Activated CD4-positive, alpha-beta T cell treated with anti-CD3 and anti-CD28 coated beads for 36 hours (primary cell): ENCODE measurements at regions of chr1 and their contacts with region 1.

Region 1: DNA sequence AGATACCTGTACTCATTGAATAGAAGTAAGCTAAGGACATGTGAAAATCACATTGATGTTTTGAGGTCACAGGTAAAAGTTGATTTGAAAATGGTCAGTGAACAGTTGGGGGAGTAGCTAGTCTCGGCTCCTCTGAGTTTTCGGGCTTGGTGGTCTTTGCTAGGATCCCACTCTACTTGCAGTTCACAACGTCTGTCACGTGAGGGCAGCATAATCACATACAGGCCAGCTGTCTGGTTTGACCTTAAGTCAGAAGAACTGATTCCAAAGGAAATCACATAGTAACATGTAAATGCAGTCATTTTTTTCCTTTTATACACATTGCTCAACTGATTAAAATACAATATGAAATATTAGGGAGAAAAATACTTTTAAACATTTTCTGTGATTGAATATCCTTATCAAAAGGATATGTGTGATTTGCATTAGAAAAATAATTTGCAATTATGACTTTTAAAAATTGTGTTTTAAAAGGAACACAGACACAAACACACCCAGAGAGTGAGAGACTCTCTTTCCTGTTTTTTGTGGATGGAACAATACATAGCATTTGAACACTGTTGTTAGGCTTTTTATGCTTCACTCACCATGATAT is 21.8 kb upstream of the PDC start:
- DNase-seq: peak; percentile 76
- ATAC-seq: peak; percentile 58
- H3K4me3 Mint-ChIP-seq: no peak overlapping the region
- H3K27ac Mint-ChIP-seq: no peak overlapping the region
- H3K4me1 Mint-ChIP-seq: no peaks in the 10 kb centered on the region
- H3K27me3 Mint-ChIP-seq: peaks cover 3% of the 10 kb centered on the region

Region 2: GRCh38 chr1:186465946-186466345 is 16.8 kb before region 1 on chr1:
- CTCF ChIA-PET with region 1: no interaction called
- POLR2A ChIA-PET with region 1: no interaction called
- intact Hi-C with region 1: no loop called
- DNase-seq: no peak
- ATAC-seq: no peak
- H3K4me3 Mint-ChIP-seq: no peak overlapping the region
- H3K27ac Mint-ChIP-seq: no peak overlapping the region
- H3K4me1 Mint-ChIP-seq: no peaks in the 10 kb centered on the region
- H3K27me3 Mint-ChIP-seq: peaks cover 6% of the 10 kb centered on the region

Region 3: GRCh38 chr1:186502087-186502486 is 19.3 kb after region 1 on chr1:
- CTCF ChIA-PET with region 1: no interaction called
- POLR2A ChIA-PET with region 1: no interaction called
- intact Hi-C with region 1: no loop called
- DNase-seq: no peak
- ATAC-seq: no peak
- H3K4me3 Mint-ChIP-seq: no peak overlapping the region
- H3K27ac Mint-ChIP-seq: no peak overlapping the region
- H3K4me1 Mint-ChIP-seq: no peaks in the 10 kb centered on the region
- H3K27me3 Mint-ChIP-seq: no peaks in the 10 kb centered on the region

Region 4: GRCh38 chr1:186531561-186532165 is 48.9 kb after region 1 on chr1:
- CTCF ChIA-PET with region 1: no interaction called
- POLR2A ChIA-PET with region 1: no interaction called
- intact Hi-C with region 1: no loop called
- DNase-seq: no peak
- ATAC-seq: no peak
- H3K4me3 Mint-ChIP-seq: no peak overlapping the region
- H3K27ac Mint-ChIP-seq: no peak overlapping the region
- H3K4me1 Mint-ChIP-seq: no peaks in the 10 kb centered on the region
- H3K27me3 Mint-ChIP-seq: peaks cover 2% of the 10 kb centered on the region

Region 5: GRCh38 chr1:186605762-186606350 is 123.1 kb after region 1 on chr1:
- CTCF ChIA-PET with region 1: no interaction called
- POLR2A ChIA-PET with region 1: no interaction called
- intact Hi-C with region 1: loop called (anchors 2 to 5 kb)
- DNase-seq: peak; percentile 47
- ATAC-seq: peak; percentile 42
- H3K4me3 Mint-ChIP-seq: no peak overlapping the region
- H3K27ac Mint-ChIP-seq: no peak overlapping the region
- H3K4me1 Mint-ChIP-seq: peaks cover 4% of the 10 kb centered on the region
- H3K27me3 Mint-ChIP-seq: peaks cover 21% of the 10 kb centered on the region

Region 6: DNA sequence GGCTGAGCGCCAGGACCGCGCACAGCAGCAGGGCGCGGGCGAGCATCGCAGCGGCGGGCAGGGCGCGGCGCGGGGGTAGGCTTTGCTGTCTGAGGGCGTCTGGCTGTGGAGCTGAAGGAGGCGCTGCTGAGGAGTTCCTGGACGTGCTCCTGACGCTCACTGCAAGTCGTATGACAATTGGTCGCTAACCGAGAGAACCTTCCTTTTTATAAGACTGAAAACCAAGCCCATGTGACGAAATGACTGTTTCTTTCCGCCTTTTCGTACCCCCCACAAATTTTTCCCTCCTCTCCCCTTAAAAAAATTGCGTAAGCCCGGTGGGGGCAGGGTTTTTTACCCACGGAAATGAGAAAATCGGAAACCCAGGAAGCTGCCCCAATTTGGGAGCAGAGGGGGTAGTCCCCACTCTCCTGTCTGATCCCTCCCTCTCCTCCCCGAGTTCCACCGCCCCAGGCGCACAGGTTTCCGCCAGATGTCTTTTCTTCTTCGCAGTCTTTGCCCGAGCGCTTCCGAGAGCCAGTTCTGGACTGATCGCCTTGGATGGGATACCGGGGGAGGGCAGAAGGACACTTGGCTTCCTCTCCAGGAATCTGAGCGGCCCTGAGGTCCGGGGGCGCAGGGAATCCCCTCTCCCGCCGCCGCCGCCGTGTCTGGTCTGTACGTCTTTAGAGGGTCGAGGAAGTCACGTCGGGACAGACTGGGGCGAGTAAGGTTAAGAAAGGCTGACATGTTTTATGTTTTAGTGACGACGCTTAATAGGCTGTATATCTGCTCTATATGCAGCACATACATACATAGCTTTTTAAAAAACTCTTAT is 197.7 kb after region 1 on chr1 and contains the start of gene PTGS2:
- CTCF ChIA-PET with region 1: interaction called, 3 read pairs
- POLR2A ChIA-PET with region 1: no interaction called
- intact Hi-C with region 1: loop called (anchors 1 to 5 kb)
- DNase-seq: peak; percentile 72
- ATAC-seq: peak; percentile 96
- H3K4me3 Mint-ChIP-seq: peak within 1 kb of the TSS; percentile 73
- H3K27ac Mint-ChIP-seq: peak within 1 kb of the TSS; percentile 43
- H3K4me1 Mint-ChIP-seq: peaks cover 10% of the 10 kb centered on the region
- H3K27me3 Mint-ChIP-seq: peaks cover 43% of the 10 kb centered on the region
- total RNA-seq, gene PTGS2: 1.1 to 1.2 TPM

Region 7: GRCh38 chr1:186763107-186763506 is 280.3 kb after region 1 on chr1:
- CTCF ChIA-PET with region 1: no interaction called
- POLR2A ChIA-PET with region 1: no interaction called
- intact Hi-C with region 1: loop called in 1 of 2 experiments (anchors 5 kb)
- DNase-seq: no peak
- ATAC-seq: peak; percentile 53
- H3K4me3 Mint-ChIP-seq: no peak overlapping the region
- H3K27ac Mint-ChIP-seq: no peak overlapping the region
- H3K4me1 Mint-ChIP-seq: no peaks in the 10 kb centered on the region
- H3K27me3 Mint-ChIP-seq: no peaks in the 10 kb centered on the region

Region 8: GRCh38 chr1:186985889-186986491 is 503.2 kb after region 1 on chr1:
- CTCF ChIA-PET with region 1: interaction called, 11 read pairs
- POLR2A ChIA-PET with region 1: no interaction called
- intact Hi-C with region 1: loop called (anchors 1 kb)
- DNase-seq: no peak
- ATAC-seq: peak; percentile 39
- H3K4me3 Mint-ChIP-seq: no peak overlapping the region
- H3K27ac Mint-ChIP-seq: no peak overlapping the region
- H3K4me1 Mint-ChIP-seq: no peaks in the 10 kb centered on the region
- H3K27me3 Mint-ChIP-seq: peaks cover 4% of the 10 kb centered on the region